ENCODE measurements at regions of chr12 and their contacts with region 1.

Region 1: GRCh38 chr12:63045020-63045860 is 105.8 kb downstream of the AVPR1A start:
- DNase-seq: peak in 1 of 2 donors; percentile 78
- H3K4me3 ChIP-seq: no peak overlapping the region
- H3K27ac ChIP-seq: peak overlapping the region; percentile 78 to 86
- H3K4me1 ChIP-seq: peaks cover 0 to 9% of the 10 kb centered on the region in 2 donors
- H3K27me3 ChIP-seq: no peaks in the 10 kb centered on the region
- CTCF ChIP-seq: no peak

Region 2: DNA sequence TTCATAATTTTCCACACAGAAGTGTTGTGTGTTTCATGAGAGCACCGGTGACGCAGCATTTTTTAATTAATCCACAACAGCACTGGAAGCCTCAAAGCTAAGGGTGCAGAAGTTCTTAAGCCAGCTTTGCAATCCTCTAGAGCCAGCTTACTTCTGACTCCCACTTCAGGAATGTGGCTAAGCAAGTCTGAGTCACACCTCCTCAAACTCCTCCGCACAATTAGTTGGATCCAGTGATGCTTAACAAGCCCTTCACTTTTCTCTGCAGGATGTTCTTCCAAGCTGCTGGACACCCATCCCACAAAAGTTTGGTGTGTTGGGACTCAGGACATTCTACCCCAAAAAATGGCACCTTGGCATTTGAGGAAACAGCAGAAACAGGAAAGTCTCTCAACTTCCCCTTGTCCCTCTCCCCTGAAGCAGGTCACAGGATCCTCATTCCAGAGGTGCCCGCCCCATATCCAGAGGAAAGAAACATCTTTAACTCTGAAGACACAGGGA is 320.2 kb before region 1 on chr12:
- intact Hi-C with region 1: loop called (anchors 10 kb)
- DNase-seq: peak in 1 of 2 donors; percentile 84
- H3K4me3 ChIP-seq: no peak overlapping the region
- H3K27ac ChIP-seq: peak overlapping the region; percentile 2 to 8
- H3K4me1 ChIP-seq: peaks cover 3 to 14% of the 10 kb centered on the region in 2 donors
- H3K27me3 ChIP-seq: no peaks in the 10 kb centered on the region
- CTCF ChIP-seq: no peak

Region 3: DNA sequence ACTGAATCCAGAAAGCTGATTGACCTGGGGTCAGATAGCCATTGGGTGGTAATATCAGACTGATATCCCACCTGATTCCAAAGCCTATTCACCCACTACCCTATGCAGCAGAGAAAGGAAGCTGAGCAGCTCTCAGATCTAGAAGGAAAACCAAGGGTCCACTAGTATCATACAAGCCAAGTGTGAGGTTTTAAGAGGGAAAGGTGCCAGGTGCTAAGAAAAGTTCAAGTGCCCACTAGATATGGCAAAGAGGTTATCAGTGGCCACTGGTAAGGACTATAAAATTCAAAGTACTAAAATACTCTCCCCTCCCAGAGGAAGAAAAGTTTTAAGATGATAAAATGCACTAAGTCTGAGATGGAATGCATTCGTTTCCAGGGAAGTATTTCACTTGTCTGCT is 195.8 kb before region 1 on chr12:
- intact Hi-C with region 1: no loop called
- DNase-seq: no peak
- H3K4me3 ChIP-seq: no peak overlapping the region
- H3K27ac ChIP-seq: no peak overlapping the region
- H3K4me1 ChIP-seq: peaks cover 0 to 10% of the 10 kb centered on the region in 2 donors
- H3K27me3 ChIP-seq: no peaks in the 10 kb centered on the region
- CTCF ChIP-seq: no peak

Region 4: GRCh38 chr12:62862259-62862881 is 182.9 kb before region 1 on chr12:
- intact Hi-C with region 1: loop called (anchors 5 kb)
- DNase-seq: no peak
- H3K4me3 ChIP-seq: no peak overlapping the region
- H3K27ac ChIP-seq: peak overlapping the region in 1 of 2 donors; percentile 70
- H3K4me1 ChIP-seq: peaks cover 0 to 21% of the 10 kb centered on the region in 2 donors
- H3K27me3 ChIP-seq: no peaks in the 10 kb centered on the region
- CTCF ChIP-seq: no peak

Region 5: DNA sequence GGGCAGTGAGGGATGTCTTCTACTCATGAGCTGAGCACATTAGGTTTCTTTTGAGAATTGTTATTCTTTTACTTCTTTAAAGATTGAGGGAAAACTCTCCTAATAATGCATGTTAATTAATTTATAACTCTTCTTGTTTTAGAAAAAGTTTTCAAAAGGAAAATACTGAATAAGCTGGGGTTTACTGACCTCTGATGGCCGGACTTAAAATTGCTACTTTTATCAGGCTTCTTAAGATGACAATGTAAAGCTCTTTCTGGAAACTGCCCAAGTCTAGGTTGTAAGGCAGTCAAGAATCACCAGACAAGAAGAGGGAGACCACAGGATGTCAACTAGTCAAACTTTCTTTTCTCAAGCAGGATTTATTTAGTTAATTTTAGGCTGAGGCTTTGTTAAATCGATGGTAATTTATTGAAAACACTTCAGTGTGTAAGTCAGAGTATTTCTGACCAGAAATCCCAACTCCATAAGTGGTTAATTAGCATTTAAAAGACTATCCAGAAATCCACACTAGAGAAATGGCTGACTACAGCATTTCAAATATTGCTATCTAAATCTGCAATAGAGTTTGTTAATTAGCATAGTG is 23.7 kb after region 1 on chr12:
- intact Hi-C with region 1: no loop called
- DNase-seq: no peak
- H3K4me3 ChIP-seq: no peak overlapping the region
- H3K27ac ChIP-seq: no peak overlapping the region
- H3K4me1 ChIP-seq: no peaks in the 10 kb centered on the region
- H3K27me3 ChIP-seq: no peaks in the 10 kb centered on the region
- CTCF ChIP-seq: peak; percentile 5 to 65 (median 57)

Measured in ascending aorta (tissue), 2 donors.